Cardiac septum (tissue), 1 donor: ENCODE measurements at regions of chr1 and their contacts with region 1.

Region 1: DNA sequence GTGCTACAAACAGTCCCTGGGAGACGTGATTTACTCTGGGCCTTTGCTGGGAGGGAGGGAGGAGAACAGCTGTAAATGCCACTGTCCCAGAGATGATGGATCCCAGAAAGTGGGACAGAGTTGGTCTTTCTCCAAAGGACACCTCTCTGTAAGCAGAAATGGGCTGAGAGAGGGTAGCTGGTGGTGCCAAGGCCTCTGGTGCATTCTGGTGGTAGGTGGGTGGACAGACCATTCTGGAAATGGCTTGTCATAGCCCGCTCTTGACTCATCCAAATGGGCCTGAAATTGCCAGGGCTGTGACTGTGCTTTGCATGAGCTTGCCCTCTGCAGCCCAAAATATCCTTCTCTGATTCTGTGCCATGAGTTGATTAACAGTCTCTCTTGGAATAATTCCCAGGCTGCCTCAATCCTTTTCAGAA is 36.1 kb downstream of the CCDC185 start:
- DNase-seq: peak; percentile 82

Region 2: DNA sequence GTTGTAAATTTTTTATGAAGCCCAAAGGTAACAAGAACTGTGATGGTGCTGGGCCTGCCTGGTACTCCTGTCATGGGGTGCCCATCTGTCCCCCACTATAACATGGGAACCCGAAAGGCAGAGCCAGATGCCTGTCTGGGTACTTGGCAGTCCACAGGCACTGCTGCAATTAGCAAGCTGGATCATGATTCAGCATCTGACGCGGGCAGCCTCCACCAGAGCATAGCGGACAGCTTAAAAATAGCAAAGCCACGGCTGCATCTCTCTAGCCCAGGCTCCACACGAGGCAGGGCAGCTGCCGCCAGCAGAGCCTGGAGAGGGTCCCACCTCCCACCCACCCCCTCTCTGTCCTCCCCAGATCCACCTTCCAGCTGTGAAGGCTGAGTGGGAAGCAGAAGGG is 88.2 kb before region 1 on chr1:
- intact Hi-C with region 1: loop called (anchors 5 kb)
- DNase-seq: peak; percentile 87